GM10248 (cell line): ENCODE measurements at regions of chr19 and their contacts with region 1.

Region 1: GRCh38 chr19:10269333-10270179 is 1.4 kb upstream of the ICAM1 start:
- DNase-seq: peak; percentile 82
- CTCF ChIP-seq: peak; percentile 98

Region 2: GRCh38 chr19:10279737-10280442 is 10.3 kb after region 1 on chr19:
- CTCF ChIA-PET with region 1: interaction called, 54 read pairs
- POLR2A ChIA-PET with region 1: interaction called, 24 read pairs
- DNase-seq: no peak
- CTCF ChIP-seq: no peak

Region 3: GRCh38 chr19:10292206-10292788 is 22.7 kb after region 1 on chr19:
- CTCF ChIA-PET with region 1: interaction called, 54 read pairs
- POLR2A ChIA-PET with region 1: interaction called, 84 read pairs
- DNase-seq: peak; percentile 91
- CTCF ChIP-seq: no peak

Region 4: GRCh38 chr19:10353793-10354391 is 84.3 kb after region 1 on chr19:
- CTCF ChIA-PET with region 1: no interaction called
- POLR2A ChIA-PET with region 1: no interaction called
- DNase-seq: peak; percentile 17
- CTCF ChIP-seq: no peak

Region 5: GRCh38 chr19:10388957-10389356 is 119.4 kb after region 1 on chr19:
- CTCF ChIA-PET with region 1: interaction called, 484 read pairs
- POLR2A ChIA-PET with region 1: interaction called, 22 read pairs
- DNase-seq: peak; percentile 66
- CTCF ChIP-seq: peak; percentile 88

Region 6: DNA sequence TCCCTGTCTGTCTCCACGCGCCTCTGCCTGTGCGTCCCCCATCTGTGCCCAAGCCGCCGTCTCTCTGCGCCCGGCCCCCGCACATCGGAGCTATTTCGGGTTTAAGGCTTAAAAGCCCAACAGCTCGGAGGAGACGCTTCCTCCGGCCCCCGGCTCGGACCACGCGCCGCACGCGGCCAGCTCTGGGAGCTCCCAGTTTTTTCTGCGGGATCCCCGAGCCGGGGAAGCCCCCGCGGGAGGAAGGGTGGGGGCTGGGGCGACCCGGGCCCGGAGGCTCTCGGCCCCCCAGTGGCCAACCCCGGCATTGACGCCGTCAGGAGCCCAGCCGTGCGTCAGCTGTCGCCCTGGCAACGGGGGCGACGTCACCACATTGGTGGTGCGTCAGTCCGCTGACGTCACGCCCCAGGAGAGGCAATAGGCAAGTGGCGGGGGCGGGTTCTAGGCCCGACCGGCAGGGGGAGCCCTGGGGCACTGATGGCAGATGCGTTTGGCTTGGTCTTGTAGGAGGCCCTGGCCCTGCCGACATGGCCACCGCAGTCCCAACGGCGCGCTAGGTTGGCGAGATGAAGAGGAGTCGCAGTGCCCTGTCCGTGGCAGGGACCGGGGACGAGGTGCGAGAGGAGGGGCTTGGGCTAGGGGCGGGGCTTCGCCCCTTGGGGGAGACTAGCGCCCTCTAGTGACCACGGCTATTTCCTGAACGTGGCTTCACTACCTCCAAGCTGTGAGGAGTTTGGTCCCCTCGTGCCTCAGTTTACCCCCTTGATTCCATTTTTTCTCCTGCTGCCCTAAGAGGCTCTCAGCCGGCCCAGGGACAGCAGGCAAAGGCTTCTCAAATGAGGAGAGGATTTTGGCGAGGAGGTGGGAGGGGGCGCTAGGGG is 147.1 kb after region 1 on chr19:
- CTCF ChIA-PET with region 1: interaction called, 19 read pairs
- POLR2A ChIA-PET with region 1: interaction called, 8 read pairs
- DNase-seq: peak; percentile 89
- CTCF ChIP-seq: peak; percentile 74